Activated T-helper 1 cell treated with anti-CD3 and anti-CD28 coated beads, Interleukin-12 subunit alpha, Interleukin-12 subunit beta, Interleukin-2, Interleukin-4 antibody, amounts not matched to agents 30 ng/mL and 10 ng/mL and 1 ng/mL, durations not matched to agents 14 hours and 24 hours and 36 hours (primary cell): ENCODE measurements at regions of chr7 and their contacts with region 1.

Region 1: GRCh38 chr7:41481353-41481752 is 221.5 kb downstream of the INHBA start:
- DNase-seq: no peak
- H3K4me3 Mint-ChIP-seq: no peak overlapping the region
- H3K27ac Mint-ChIP-seq: no peak overlapping the region
- H3K4me1 Mint-ChIP-seq: no peaks in the 10 kb centered on the region
- H3K27me3 Mint-ChIP-seq: no peaks in the 10 kb centered on the region

Region 2: DNA sequence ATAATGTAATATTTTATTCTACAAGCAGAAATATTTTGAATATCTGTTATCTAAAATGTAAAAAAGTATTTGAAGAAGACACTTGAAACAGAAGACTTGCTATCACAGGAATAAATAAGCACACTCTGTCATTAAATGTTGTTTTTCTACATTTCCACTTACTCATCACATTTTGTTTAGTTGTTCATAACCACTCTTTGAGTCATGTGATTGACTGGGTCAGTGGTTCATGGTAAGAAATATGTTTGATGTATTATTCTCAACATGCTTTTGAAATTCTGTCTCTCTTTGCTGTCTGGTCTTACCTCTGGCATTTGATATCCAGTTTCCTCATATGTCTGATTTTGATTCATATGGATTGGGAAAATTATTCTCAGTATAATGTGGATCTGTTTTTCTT is 1174.8 kb before region 1 on chr7:
- intact Hi-C with region 1: loop called (anchors 5 kb)
- DNase-seq: no peak
- H3K4me3 Mint-ChIP-seq: no peak overlapping the region
- H3K27ac Mint-ChIP-seq: no peak overlapping the region
- H3K4me1 Mint-ChIP-seq: peaks cover 8% of the 10 kb centered on the region
- H3K27me3 Mint-ChIP-seq: peaks cover 9% of the 10 kb centered on the region